Sciatic nerve (tissue), 2 donors: ENCODE measurements at regions of chr13 and their contacts with region 1.

Region 1: DNA sequence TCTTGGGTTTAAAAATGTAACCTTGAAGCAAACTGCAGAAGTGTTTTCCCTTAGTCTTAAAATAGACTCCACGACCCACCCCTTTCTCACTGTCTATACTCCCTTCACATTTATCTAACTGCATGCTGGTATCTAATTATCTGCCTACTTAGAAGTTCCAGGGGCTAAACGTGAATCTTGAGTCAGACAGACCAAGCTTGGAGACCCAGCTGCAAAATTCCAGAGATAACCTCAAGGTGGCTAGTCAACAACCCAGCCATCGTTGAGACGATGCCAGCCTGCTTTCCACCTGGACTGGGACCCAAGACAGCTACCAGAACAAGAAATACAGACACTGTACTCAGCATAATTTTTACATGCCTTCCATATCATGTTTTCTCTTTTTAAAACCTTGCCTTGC is 82.1 kb downstream of the CDADC1 start:
- DNase-seq: no peak
- ATAC-seq: no peak

Region 2: GRCh38 chr13:49347646-49348385 is 18.0 kb after region 1 on chr13:
- intact Hi-C with region 1: loop called (anchors 2 kb)
- DNase-seq: no peak
- ATAC-seq: no peak

Region 3: GRCh38 chr13:49649244-49649962 is 319.6 kb after region 1 on chr13:
- intact Hi-C with region 1: no loop called
- DNase-seq: no peak
- ATAC-seq: peak; percentile 69